HepG2 (cell line): ENCODE measurements at regions of chr22 and their contacts with region 1.

Region 1: GRCh38 chr22:18044548-18045271 is 20.3 kb upstream of the MICAL3 start:
- DNase-seq: peak; percentile 94
- ATAC-seq: peak; percentile 97
- H3K4me3 ChIP-seq: peak overlapping the region; percentile 19 to 60 (median 20)
- H3K27ac ChIP-seq: peak overlapping the region; percentile 32
- H3K4me1 ChIP-seq: peaks cover 47% of the 10 kb centered on the region
- H3K27me3 ChIP-seq: no peaks in the 10 kb centered on the region
- CTCF ChIP-seq: peak; percentile 16; the same call in 1 of the 2 replicates
- EP300 ChIP-seq: peak; percentile 58 to 71; a peak in 3 of 4 replicates
- POLR2A ChIP-seq: no peak
- RAD21 ChIP-seq: no peak

Region 2: GRCh38 chr22:18057568-18058209 is 13.0 kb after region 1 on chr22:
- CTCF ChIA-PET with region 1: no interaction called
- POLR2A ChIA-PET with region 1: interaction called, 57 read pairs
- in situ Hi-C with region 1: no loop called
- intact Hi-C with region 1: no loop called
- DNase-seq: peak; percentile 63
- ATAC-seq: no peak
- H3K4me3 ChIP-seq: no peak overlapping the region
- H3K27ac ChIP-seq: no peak overlapping the region
- H3K4me1 ChIP-seq: peaks cover 85% of the 10 kb centered on the region
- H3K27me3 ChIP-seq: no peaks in the 10 kb centered on the region
- CTCF ChIP-seq: no peak
- EP300 ChIP-seq: no peak
- POLR2A ChIP-seq: no peak
- RAD21 ChIP-seq: no peak

Region 3: DNA sequence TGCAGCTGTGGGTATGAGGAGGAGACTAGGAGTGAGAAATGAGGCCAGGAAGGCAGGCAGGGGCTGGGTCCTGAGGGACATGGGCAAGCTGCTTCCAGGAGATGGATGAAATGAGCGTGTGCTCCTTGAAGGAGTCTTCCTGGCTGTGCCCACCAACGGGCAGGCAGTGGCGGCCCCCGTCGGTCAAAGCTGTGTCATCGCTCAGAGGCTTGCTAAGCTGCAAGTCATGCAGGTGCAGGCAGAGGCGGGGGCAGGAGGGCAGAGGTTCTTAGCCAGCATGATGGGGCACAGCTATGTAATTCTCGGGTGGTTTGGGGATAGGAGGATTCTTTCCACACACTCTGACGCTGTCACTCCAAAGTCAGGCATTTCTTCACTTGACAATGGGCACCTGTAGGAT is 20.5 kb after region 1 on chr22:
- CTCF ChIA-PET with region 1: no interaction called
- POLR2A ChIA-PET with region 1: interaction called, 57 read pairs
- in situ Hi-C with region 1: no loop called
- intact Hi-C with region 1: no loop called
- DNase-seq: no peak
- ATAC-seq: no peak
- H3K4me3 ChIP-seq: no peak overlapping the region
- H3K27ac ChIP-seq: no peak overlapping the region
- H3K4me1 ChIP-seq: peaks cover 74% of the 10 kb centered on the region
- H3K27me3 ChIP-seq: no peaks in the 10 kb centered on the region
- CTCF ChIP-seq: peak; percentile 50
- EP300 ChIP-seq: no peak
- POLR2A ChIP-seq: no peak
- RAD21 ChIP-seq: no peak

Region 4: DNA sequence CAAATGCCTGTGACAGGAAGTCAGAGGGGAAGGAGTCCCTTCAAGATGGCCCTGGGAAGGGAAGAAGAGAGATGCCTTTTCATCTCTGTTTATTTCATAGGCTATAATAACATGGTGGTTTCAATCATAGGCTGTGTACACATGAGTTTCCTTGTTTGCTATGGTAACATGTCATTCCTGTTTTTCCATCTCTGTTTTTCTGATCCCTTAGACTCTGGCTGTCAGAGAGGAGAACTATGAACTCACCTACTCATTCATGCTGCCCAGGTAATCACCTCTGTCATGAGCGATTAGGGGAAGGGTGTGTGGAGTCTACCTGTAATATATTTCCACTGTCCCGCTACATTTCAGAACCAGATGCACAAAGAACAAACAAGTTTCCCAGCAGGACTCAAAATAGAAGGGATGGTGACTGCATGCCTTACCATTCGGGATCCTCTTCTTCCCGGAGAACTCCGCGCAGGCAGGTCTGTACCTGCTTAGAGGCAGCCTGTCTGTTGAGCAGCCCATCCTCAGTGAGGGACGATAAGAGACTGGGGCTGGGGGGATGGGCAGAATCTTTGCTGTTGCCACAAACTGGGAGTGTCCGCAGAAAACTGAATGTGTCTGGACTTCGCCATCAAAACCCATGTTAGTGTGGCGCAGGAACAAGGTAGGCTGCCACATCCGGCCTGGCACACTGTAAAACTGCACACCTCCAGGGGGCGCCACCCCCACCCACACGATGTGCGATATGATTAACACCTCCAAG is 26.0 kb after region 1 on chr22:
- CTCF ChIA-PET with region 1: no interaction called
- POLR2A ChIA-PET with region 1: interaction called, 13 read pairs
- in situ Hi-C with region 1: no loop called
- intact Hi-C with region 1: no loop called
- DNase-seq: peak; percentile 25
- ATAC-seq: no peak; the same call in 2 of the 3 replicates
- H3K4me3 ChIP-seq: no peak overlapping the region
- H3K27ac ChIP-seq: no peak overlapping the region
- H3K4me1 ChIP-seq: peaks cover 68% of the 10 kb centered on the region
- H3K27me3 ChIP-seq: no peaks in the 10 kb centered on the region
- CTCF ChIP-seq: peak; percentile 35; the same call in 1 of the 2 replicates
- EP300 ChIP-seq: no peak
- POLR2A ChIP-seq: no peak
- RAD21 ChIP-seq: no peak